ENCODE measurements at regions of chr6 and their contacts with region 1.

Region 1: GRCh38 chr6:42766141-42766670 is 15.6 kb upstream of the BICRAL start:
- DNase-seq: peak in 1 of 2 experiments; percentile 50
- ATAC-seq: peak; percentile 76 to 78; a peak in 5 of 6 replicates
- H3K4me3 ChIP-seq: no peak overlapping the region
- H3K27ac ChIP-seq: peak overlapping the region; percentile 14 to 62; a peak in 1 of 6 replicates
- H3K4me1 ChIP-seq: peaks cover 15% of the 10 kb centered on the region
- CTCF ChIP-seq: no peak
- EP300 ChIP-seq: no peak
- POLR2A ChIP-seq: no peak
- RAD21 ChIP-seq: no peak

Region 2: GRCh38 chr6:42745707-42746462 is 20.3 kb before region 1 on chr6 and contains the start of gene TBCC:
- CTCF ChIA-PET with region 1: interaction called, 3 read pairs
- POLR2A ChIA-PET with region 1: interaction called, 13 read pairs
- DNase-seq: peak; percentile 98
- ATAC-seq: peak; percentile 82 to 88
- H3K4me3 ChIP-seq: peak within 1 kb of the TSS; percentile 73
- H3K27ac ChIP-seq: peak within 1 kb of the TSS; percentile 94 to 98
- H3K4me1 ChIP-seq: peaks cover 18% of the 10 kb centered on the region
- CTCF ChIP-seq: no peak
- EP300 ChIP-seq: no peak
- POLR2A ChIP-seq: peak; percentile 93
- RAD21 ChIP-seq: no peak
- polyA plus RNA-seq, gene TBCC: 10.2 and 10.3 TPM in 2 replicates